ENCODE measurements at regions of chr11 and their contacts with region 1.

Region 1: GRCh38 chr11:106021967-106022794 is at the start of gene MSANTD4:
- DNase-seq: peak; percentile 98 to 100
- ATAC-seq: peak; percentile 98 to 100 (median 99)
- H3K4me3 ChIP-seq: peak within 1 kb of the TSS; percentile 71 to 95 (median 81)
- H3K27ac ChIP-seq: peak within 1 kb of the TSS; percentile 53 to 87 (median 84)
- H3K4me1 ChIP-seq: peaks cover 4 to 46% (median 31%) of the 10 kb centered on the region in 9 donors
- H3K27me3 ChIP-seq: peaks cover 0 to 6% (median 0%) of the 10 kb centered on the region in 7 donors
- CTCF ChIP-seq: peak in 1 of 9 donors; percentile 24
- total RNA-seq, gene MSANTD4: 16.4 to 30.5 (median 22.5) TPM

Region 2: GRCh38 chr11:106047636-106048035 is 25.5 kb after region 1 on chr11:
- intact Hi-C with region 1: loop called in 1 of 10 experiments (anchors 2 kb)
- DNase-seq: no peak
- ATAC-seq: no peak
- H3K4me3 ChIP-seq: no peak overlapping the region
- H3K27ac ChIP-seq: no peak overlapping the region
- H3K4me1 ChIP-seq: peaks cover 0 to 5% (median 0%) of the 10 kb centered on the region in 9 donors
- H3K27me3 ChIP-seq: no peaks in the 10 kb centered on the region
- CTCF ChIP-seq: no peak

Region 3: GRCh38 chr11:106076919-106077608 is 54.9 kb after region 1 on chr11 and contains the start of gene KBTBD3:
- intact Hi-C with region 1: loop called in 8 of 10 experiments (anchors 1 to 5 kb)
- DNase-seq: peak; percentile 98 to 99
- ATAC-seq: peak; percentile 98 to 100 (median 98)
- H3K4me3 ChIP-seq: peak within 1 kb of the TSS; percentile 59 to 97 (median 85)
- H3K27ac ChIP-seq: peak within 1 kb of the TSS; percentile 85 to 99 (median 95)
- H3K4me1 ChIP-seq: peaks cover 0 to 55% (median 48%) of the 10 kb centered on the region in 9 donors
- H3K27me3 ChIP-seq: no peaks in the 10 kb centered on the region
- CTCF ChIP-seq: peak in 5 of 9 donors; percentile 31 to 58 (median 49)
- total RNA-seq, gene KBTBD3: 6.3 to 13.8 (median 9.1) TPM